WTC11 (cell line): ENCODE measurements at regions of chr17 and their contacts with region 1.

Region 1: DNA sequence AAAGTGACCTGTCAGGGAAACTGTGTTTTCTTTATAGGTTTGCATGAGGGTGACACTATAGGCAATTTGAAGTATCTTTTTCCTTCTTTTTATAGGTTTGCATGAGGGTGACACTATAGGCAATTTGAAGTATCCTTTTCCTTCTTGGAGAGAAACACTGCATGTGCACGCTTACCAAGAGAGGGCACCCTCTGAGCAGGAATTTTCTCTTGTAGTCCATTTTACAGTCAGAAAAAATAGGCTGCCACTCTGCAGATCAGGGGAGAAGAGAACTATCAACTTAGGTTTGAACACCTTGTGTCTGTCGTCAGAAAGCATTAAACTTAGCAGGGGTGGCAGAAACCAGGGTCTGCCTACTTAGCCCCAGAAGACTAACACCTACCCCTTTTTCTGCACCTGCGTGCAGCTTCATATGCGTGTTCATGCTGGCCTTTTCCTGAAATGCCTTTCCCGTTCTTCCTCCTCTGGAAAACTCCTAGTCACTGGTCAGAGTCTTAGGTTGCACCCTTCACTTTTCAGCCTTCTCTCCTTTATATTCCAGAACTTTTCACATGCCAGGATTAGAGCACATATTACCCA is 16.4 kb upstream of the SMIM36 start:
- DNase-seq: peak; percentile 34
- ATAC-seq: peak; percentile 87
- H3K4me3 Mint-ChIP-seq: no peak overlapping the region
- H3K27ac Mint-ChIP-seq: no peak overlapping the region
- H3K4me1 Mint-ChIP-seq: no peaks in the 10 kb centered on the region
- H3K27me3 Mint-ChIP-seq: no peaks in the 10 kb centered on the region
- CTCF ChIP-seq: no peak

Region 2: DNA sequence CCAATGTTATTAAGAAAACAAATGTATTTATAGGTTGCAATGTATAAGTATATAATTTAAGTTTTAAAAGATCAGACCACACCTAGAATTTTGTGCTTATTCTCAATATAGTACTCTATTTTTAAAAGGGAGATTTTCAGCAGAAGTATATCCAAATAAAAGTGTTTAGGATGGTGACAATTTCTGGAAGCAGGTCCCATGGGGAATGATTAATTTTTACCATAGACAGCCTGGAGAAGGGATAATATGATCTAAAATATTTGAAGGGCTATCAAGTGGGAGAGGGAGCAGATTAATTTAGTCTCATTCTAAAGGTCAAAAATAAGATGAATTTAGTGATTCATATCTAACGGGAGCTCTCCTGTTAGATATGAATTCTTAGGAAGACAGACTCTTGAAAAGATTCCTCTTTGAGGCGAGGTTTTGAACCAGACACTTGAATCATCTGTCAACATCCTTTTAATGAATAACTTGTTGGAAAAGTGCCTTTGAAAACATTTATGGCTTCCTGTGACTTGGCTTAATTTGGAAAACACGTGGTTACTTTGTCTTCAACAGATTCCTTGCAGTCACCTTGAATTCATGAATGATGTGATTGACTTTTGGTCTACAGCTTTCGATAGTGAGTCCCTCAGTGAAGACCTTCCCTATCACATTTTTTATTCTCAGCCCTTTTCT is 12.9 kb after region 1 on chr17:
- CTCF ChIA-PET with region 1: no interaction called
- POLR2A ChIA-PET with region 1: no interaction called
- DNase-seq: no peak
- ATAC-seq: no peak
- H3K4me3 Mint-ChIP-seq: no peak overlapping the region
- H3K27ac Mint-ChIP-seq: no peak overlapping the region
- H3K4me1 Mint-ChIP-seq: no peaks in the 10 kb centered on the region
- H3K27me3 Mint-ChIP-seq: no peaks in the 10 kb centered on the region
- CTCF ChIP-seq: no peak

Region 3: GRCh38 chr17:55770148-55770870 is 242.7 kb after region 1 on chr17:
- CTCF ChIA-PET with region 1: interaction called, 21 read pairs
- POLR2A ChIA-PET with region 1: no interaction called
- DNase-seq: no peak
- ATAC-seq: peak; percentile 77
- H3K4me3 Mint-ChIP-seq: no peak overlapping the region
- H3K27ac Mint-ChIP-seq: no peak overlapping the region
- H3K4me1 Mint-ChIP-seq: peaks cover 4% of the 10 kb centered on the region; the same call in 1 of the 2 replicates
- H3K27me3 Mint-ChIP-seq: no peaks in the 10 kb centered on the region
- CTCF ChIP-seq: no peak

Region 4: GRCh38 chr17:55825213-55825612 is 297.6 kb after region 1 on chr17:
- CTCF ChIA-PET with region 1: interaction called, 11 read pairs
- POLR2A ChIA-PET with region 1: no interaction called
- DNase-seq: no peak
- ATAC-seq: peak; percentile 69
- H3K4me3 Mint-ChIP-seq: no peak overlapping the region
- H3K27ac Mint-ChIP-seq: no peak overlapping the region
- H3K4me1 Mint-ChIP-seq: peaks cover 12% of the 10 kb centered on the region
- H3K27me3 Mint-ChIP-seq: no peaks in the 10 kb centered on the region
- CTCF ChIP-seq: no peak